ENCODE measurements at regions of chr20 and their contacts with region 1.

Region 1: GRCh38 chr20:34363062-34363464 is at the start of gene ITCH:
- DNase-seq: peak; percentile 97
- ATAC-seq: peak; percentile 98
- H3K4me3 Mint-ChIP-seq: peak within 1 kb of the TSS; percentile 96
- H3K27ac Mint-ChIP-seq: peak within 1 kb of the TSS; percentile 99
- H3K4me1 Mint-ChIP-seq: peaks cover 26% of the 10 kb centered on the region
- H3K27me3 Mint-ChIP-seq: no peaks in the 10 kb centered on the region; the same call in 1 of the 2 replicates
- CTCF ChIP-seq: no peak
- total RNA-seq, gene ITCH: 35.8 to 43.4 TPM (median 36.4 TPM) in 3 replicates

Region 2: DNA sequence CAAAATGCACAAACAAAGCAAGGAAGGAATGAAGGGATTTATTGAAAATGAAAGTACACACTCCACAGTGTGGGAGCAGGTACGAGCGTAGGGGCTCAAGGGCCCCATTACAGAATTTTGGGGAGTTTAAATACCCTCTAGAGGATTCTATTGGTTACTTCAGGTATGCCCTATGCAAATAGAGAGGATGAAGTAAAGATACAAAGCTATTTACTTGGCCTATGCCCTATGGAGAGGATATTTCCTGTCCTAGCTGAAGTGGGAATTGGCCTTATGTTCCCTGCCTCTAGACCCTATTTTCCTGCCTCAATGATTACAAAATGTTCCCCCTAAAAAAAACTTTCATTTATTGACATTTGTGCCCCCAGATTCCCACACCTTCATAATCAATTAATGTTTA is 181.6 kb before region 1 on chr20:
- CTCF ChIA-PET with region 1: no interaction called
- POLR2A ChIA-PET with region 1: no interaction called
- DNase-seq: no peak
- ATAC-seq: peak; percentile 59
- H3K4me3 Mint-ChIP-seq: no peak overlapping the region
- H3K27ac Mint-ChIP-seq: no peak overlapping the region
- H3K4me1 Mint-ChIP-seq: peaks cover 15% of the 10 kb centered on the region
- H3K27me3 Mint-ChIP-seq: no peaks in the 10 kb centered on the region
- CTCF ChIP-seq: no peak

Region 3: DNA sequence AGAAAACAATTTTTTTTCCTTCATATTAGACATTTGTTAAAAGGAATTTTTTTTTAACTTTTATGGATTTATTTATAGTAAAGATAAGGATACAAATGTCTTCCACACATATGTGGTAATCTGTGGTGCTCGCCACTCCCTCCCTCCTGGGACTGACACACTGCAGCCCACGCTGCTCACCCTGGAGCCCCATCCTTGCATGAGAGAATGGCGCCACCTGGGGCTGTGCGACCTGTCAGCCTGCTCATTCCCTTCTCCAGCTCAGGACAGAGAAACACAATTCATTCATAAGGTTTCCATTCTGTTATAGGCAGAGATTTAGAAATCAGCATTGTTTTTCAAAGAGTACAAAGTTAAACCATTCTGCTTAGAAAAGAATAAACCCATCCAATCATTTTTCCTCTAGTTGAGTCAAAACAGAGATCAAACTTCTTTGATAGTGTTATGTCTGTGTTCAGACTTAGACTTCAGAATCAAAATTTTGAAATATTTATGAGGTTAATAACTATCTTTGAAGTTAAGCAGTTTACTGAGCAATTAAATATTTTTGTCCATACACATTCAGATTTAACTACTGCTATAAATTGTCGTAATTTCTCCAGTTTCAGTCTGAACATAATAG is 110.3 kb after region 1 on chr20:
- CTCF ChIA-PET with region 1: no interaction called
- POLR2A ChIA-PET with region 1: no interaction called
- DNase-seq: peak; percentile 74
- ATAC-seq: peak; percentile 94
- H3K4me3 Mint-ChIP-seq: no peak overlapping the region
- H3K27ac Mint-ChIP-seq: no peak overlapping the region
- H3K4me1 Mint-ChIP-seq: no peaks in the 10 kb centered on the region
- H3K27me3 Mint-ChIP-seq: no peaks in the 10 kb centered on the region
- CTCF ChIP-seq: no peak

Region 4: GRCh38 chr20:34516247-34517113 is 153.4 kb after region 1 on chr20 and contains the start of gene DYNLRB1:
- CTCF ChIA-PET with region 1: interaction called, 5 read pairs
- POLR2A ChIA-PET with region 1: interaction called, 12 read pairs
- DNase-seq: peak; percentile 98
- ATAC-seq: peak; percentile 85
- H3K4me3 Mint-ChIP-seq: peak within 1 kb of the TSS; percentile 97
- H3K27ac Mint-ChIP-seq: peak within 1 kb of the TSS; percentile 98
- H3K4me1 Mint-ChIP-seq: peaks cover 20% of the 10 kb centered on the region
- H3K27me3 Mint-ChIP-seq: no peaks in the 10 kb centered on the region
- CTCF ChIP-seq: no peak
- total RNA-seq, gene DYNLRB1: 99.3 to 126 TPM (median 115 TPM) in 3 replicates

Measured in WTC11 (cell line).